ENCODE measurements at regions of chr1 and their contacts with region 1.

Region 1: DNA sequence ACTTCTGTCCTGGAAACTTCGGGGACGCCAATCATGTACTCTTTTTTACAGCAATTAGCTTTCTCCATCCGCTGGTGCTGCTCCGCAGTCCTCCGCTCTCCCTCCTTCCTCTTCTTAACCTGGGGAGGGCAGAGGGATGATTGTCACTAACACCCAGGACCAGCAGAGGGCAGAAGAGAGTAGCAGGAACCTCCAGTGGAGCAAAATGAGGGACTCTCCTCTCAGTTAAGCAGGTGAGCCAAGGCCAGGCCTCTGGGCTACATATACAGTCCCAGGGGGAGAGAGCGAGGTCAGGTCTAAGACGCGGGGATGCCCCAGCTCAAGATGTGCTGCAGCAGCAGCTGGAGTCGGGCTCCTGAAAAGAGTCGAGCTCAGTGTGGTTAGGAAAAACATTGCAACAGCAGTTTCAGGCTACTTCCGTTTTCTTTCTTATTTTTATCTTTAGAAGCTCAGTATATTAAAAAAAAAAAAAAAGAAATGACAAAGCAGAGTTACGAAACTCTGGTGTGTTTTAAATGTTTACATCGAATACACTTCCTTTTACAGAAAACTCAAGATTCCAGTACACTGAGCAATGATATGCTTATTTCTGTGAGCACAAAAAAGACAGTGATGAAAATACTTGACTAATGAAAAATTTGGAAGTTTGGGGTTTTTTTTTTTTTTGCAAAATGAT is 25.7 kb upstream of the NLRP3 start:
- DNase-seq: peak; percentile 88
- H3K4me3 ChIP-seq: no peak overlapping the region
- H3K27ac ChIP-seq: no peak overlapping the region
- H3K4me1 ChIP-seq: peaks cover 5% of the 10 kb centered on the region
- H3K27me3 ChIP-seq: no peaks in the 10 kb centered on the region
- CTCF ChIP-seq: peak; percentile 89

Region 2: DNA sequence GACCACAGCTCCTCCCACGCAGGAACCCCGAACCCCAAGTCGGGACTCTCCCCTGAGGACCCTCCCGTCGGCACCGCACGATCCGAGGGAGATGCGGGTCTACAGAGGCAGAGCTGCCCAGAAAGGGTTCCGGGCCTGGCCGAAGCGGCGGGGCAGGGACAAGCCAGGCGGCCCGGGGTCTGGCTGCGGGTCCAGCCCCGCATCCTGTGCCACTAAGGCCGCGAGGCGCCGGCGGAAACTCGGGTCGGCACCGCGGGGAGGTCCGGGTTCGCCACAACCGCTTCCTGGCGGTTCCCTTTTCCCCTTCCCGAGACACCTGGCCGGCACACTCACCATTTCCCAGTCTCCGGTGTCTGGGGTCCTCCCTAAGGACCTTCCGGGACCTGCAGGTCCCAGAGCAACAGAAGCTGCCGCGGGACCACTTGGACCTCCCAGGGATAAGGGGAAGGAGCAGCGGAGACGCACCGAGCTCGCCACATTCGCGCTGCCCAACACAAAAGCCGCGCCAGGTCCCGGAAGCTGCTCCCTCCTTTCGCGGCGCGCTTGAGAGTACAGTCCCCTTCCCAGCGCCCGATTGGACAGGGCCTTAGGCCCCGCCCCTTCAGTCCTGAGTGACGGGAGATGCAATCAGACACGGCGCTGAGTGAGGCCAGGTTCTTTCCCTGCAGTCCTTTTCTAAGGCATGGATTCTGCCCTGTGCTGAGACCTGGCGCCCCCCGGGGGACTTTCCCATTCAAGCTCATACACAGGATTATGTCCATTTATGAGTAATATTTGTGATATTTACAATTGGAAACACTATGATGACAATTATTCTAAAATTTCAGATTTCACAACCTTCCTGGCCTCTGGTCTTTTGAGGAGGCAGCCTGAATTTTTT is 311.8 kb before region 1 on chr1 and contains the start of gene ZNF670:
- intact Hi-C with region 1: no loop called
- DNase-seq: peak; percentile 99
- H3K4me3 ChIP-seq: peak within 1 kb of the TSS; percentile 70
- H3K27ac ChIP-seq: peak within 1 kb of the TSS; percentile 19
- H3K4me1 ChIP-seq: no peaks in the 10 kb centered on the region
- H3K27me3 ChIP-seq: no peaks in the 10 kb centered on the region
- CTCF ChIP-seq: no peak
- total RNA-seq, gene ZNF670: 1.7 to 2.6 TPM

Region 3: GRCh38 chr1:247448107-247448791 is 58.0 kb after region 1 on chr1:
- intact Hi-C with region 1: loop called (anchors 10 kb)
- DNase-seq: peak; percentile 56
- H3K4me3 ChIP-seq: peak overlapping the region; percentile 15
- H3K27ac ChIP-seq: no peak overlapping the region
- H3K4me1 ChIP-seq: no peaks in the 10 kb centered on the region
- H3K27me3 ChIP-seq: no peaks in the 10 kb centered on the region
- CTCF ChIP-seq: no peak

Region 4: DNA sequence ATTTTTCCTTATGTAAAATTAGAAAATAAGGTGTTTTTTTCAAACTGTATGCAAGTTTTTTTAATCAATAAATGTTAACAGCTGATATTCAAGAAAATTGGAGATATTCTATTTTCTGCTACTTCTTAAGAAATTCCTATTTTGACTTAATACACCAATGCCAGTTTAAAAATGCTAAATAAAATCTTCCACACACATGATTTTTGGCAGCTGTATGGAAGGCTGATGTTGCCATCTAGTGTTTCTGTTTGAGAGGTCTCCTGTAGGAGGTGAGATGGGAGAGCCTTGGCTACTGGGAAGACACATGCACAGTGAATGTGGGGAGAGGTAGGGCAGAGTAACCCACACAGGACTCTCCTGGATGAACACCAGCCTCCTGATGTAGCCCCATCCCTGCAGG is 96.8 kb after region 1 on chr1:
- intact Hi-C with region 1: loop called (anchors 2 kb)
- DNase-seq: peak; percentile 24
- H3K4me3 ChIP-seq: no peak overlapping the region
- H3K27ac ChIP-seq: no peak overlapping the region
- H3K4me1 ChIP-seq: no peaks in the 10 kb centered on the region
- H3K27me3 ChIP-seq: no peaks in the 10 kb centered on the region
- CTCF ChIP-seq: peak; percentile 36

Region 5: GRCh38 chr1:247576495-247576894 is 186.2 kb after region 1 on chr1:
- intact Hi-C with region 1: loop called (anchors 5 kb)
- DNase-seq: no peak
- H3K4me3 ChIP-seq: no peak overlapping the region
- H3K27ac ChIP-seq: no peak overlapping the region
- H3K4me1 ChIP-seq: no peaks in the 10 kb centered on the region
- H3K27me3 ChIP-seq: no peaks in the 10 kb centered on the region
- CTCF ChIP-seq: peak; percentile 17

Measured in colonic mucosa (tissue), 4 donors.